Activated CD4-positive, alpha-beta memory T cell treated with anti-CD3 and anti-CD28 coated beads for 36 hours (primary cell): ENCODE measurements at regions of chr1 and their contacts with region 1.

Region 1: DNA sequence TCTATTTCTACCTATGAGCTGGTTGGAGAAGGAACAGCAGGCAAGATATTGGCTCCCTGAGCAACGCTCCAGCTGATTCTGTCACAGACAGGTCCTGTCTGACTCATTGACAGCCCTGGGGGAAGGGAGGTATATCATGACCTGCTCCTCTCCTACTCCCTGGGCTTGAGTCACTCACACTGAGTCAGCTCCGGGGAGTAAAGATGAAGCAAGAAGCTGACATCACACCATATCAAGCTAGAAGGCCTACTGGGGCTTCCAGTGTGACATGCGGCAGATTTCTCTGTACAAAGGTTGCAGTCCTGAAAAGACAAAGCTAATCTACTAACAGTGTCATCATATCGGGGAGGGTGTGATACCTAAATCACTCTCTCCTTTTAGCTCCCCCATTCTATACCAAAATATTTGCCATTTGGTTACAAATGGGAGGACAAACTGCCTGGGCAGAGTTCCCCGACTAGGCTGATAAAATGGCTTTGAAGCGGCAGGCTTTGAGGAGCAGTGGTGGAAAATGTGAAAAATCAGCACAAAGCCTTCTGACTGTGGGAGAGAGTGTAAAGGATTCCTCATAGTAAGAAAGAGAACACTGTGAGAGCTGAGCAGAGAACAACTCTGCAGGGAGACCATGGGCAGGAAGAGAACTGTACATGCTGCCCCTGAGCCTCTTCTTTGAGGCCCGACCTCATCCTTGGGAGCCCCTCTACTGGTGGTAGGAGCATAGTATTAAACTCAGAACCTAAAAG is 15.5 kb downstream of the PI4KB start:
- DNase-seq: peak; percentile 91
- H3K4me3 Mint-ChIP-seq: peak overlapping the region; percentile 1
- H3K27ac Mint-ChIP-seq: peak overlapping the region; percentile 97
- H3K4me1 Mint-ChIP-seq: peaks cover 41% of the 10 kb centered on the region
- H3K27me3 Mint-ChIP-seq: no peaks in the 10 kb centered on the region

Region 2: GRCh38 chr1:150979092-150980056 is 332.4 kb before region 1 on chr1:
- CTCF ChIA-PET with region 1: no interaction called
- POLR2A ChIA-PET with region 1: no interaction called
- intact Hi-C with region 1: no loop called
- DNase-seq: peak; percentile 92
- H3K4me3 Mint-ChIP-seq: peak overlapping the region; percentile 7
- H3K27ac Mint-ChIP-seq: no peak overlapping the region
- H3K4me1 Mint-ChIP-seq: peaks cover 33% of the 10 kb centered on the region
- H3K27me3 Mint-ChIP-seq: no peaks in the 10 kb centered on the region

Region 3: GRCh38 chr1:151327223-151327902 is 15.6 kb after region 1 on chr1 and contains the start of gene PI4KB:
- CTCF ChIA-PET with region 1: interaction called, 23 read pairs
- POLR2A ChIA-PET with region 1: interaction called, 41 read pairs
- intact Hi-C with region 1: loop called (anchors 1 kb)
- DNase-seq: peak; percentile 93
- H3K4me3 Mint-ChIP-seq: peak within 1 kb of the TSS; percentile 95
- H3K27ac Mint-ChIP-seq: peak within 1 kb of the TSS; percentile 89
- H3K4me1 Mint-ChIP-seq: peaks cover 32% of the 10 kb centered on the region
- H3K27me3 Mint-ChIP-seq: no peaks in the 10 kb centered on the region
- total RNA-seq, gene PI4KB: 54.7 to 62.9 TPM

Region 4: GRCh38 chr1:151399890-151400495 is 88.2 kb after region 1 on chr1:
- CTCF ChIA-PET with region 1: interaction called, 6 read pairs
- POLR2A ChIA-PET with region 1: interaction called, 4 read pairs
- intact Hi-C with region 1: loop called (anchors 2 kb)
- DNase-seq: peak; percentile 37
- H3K4me3 Mint-ChIP-seq: peak overlapping the region; percentile 88
- H3K27ac Mint-ChIP-seq: peak overlapping the region; percentile 95
- H3K4me1 Mint-ChIP-seq: peaks cover 29% of the 10 kb centered on the region
- H3K27me3 Mint-ChIP-seq: no peaks in the 10 kb centered on the region